HepG2 (cell line): ENCODE measurements at regions of chr4 and their contacts with region 1.

Region 1: DNA sequence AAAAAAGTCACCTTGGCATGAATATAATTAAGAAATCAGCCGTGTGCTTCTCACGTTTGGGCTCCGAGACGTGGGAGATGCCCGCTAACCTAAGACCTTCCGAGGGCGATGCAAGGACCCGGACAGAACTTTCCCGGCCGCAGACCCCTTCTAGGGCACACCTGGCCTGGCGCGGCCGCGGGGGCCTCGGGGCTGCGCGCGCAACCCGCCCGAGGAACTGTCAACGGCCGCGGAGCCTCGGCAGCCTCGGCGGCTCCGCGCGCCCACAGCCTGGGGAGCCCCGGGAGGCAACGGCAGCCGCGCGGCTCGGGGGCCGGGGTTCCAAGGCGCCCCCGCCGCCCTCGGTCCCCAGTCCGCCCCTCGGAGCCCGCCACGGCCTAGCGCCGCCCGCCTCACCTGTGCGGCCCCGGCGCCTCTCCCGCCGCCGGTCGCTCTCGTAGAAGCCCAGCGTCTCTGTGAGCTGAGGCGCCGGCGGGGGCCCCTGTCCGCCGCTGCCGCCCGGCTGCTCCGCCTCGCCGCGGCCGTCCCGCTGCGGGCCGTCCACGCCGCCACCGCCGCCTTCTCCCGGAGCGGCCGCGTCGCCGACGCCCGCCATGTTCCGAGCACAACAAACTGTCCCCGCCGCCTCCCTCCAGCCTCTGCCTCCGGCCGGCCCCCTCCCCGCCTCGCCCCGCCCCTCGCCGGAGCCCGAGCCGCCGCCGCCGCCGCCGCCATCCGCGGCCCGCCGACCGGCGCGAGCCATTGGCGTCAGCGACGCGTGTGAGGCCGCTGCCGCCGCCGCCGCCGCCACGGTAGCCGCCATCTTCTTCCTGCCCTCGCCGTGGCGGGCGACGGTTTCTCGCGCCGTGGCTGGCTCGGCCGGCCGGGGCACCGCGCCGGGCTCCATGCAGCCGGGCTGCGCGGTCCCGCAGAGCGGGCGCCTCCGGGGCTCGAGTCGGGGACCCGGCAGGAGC is at the start of gene TAPT1:
- DNase-seq: no peak
- ATAC-seq: peak; percentile 50
- H3K4me3 ChIP-seq: peak within 1 kb of the TSS; percentile 83 to 96 (median 94)
- H3K27ac ChIP-seq: peak within 1 kb of the TSS; percentile 90
- H3K4me1 ChIP-seq: peaks cover 51% of the 10 kb centered on the region
- H3K27me3 ChIP-seq: no peaks in the 10 kb centered on the region; a peak in 1 of 5 replicates
- CTCF ChIP-seq: no peak
- EP300 ChIP-seq: no peak
- POLR2A ChIP-seq: peak in 1 of 2 experiments; percentile 54; a peak in 1 of 4 replicates
- RAD21 ChIP-seq: 0 out of 2 replicates have a peak, but pooled peaks have one; percentile 13
- total RNA-seq, gene TAPT1: 16.3 and 24.5 TPM in 2 replicates

Region 2: GRCh38 chr4:16183604-16184003 is 42.5 kb before region 1 on chr4:
- CTCF ChIA-PET with region 1: no interaction called
- POLR2A ChIA-PET with region 1: no interaction called
- in situ Hi-C with region 1: no loop called
- intact Hi-C with region 1: no loop called
- DNase-seq: no peak
- ATAC-seq: no peak
- H3K4me3 ChIP-seq: no peak overlapping the region
- H3K27ac ChIP-seq: no peak overlapping the region
- H3K4me1 ChIP-seq: no peaks in the 10 kb centered on the region
- H3K27me3 ChIP-seq: no peaks in the 10 kb centered on the region; a peak in 1 of 5 replicates
- CTCF ChIP-seq: no peak
- EP300 ChIP-seq: no peak
- POLR2A ChIP-seq: no peak
- RAD21 ChIP-seq: no peak

Region 3: DNA sequence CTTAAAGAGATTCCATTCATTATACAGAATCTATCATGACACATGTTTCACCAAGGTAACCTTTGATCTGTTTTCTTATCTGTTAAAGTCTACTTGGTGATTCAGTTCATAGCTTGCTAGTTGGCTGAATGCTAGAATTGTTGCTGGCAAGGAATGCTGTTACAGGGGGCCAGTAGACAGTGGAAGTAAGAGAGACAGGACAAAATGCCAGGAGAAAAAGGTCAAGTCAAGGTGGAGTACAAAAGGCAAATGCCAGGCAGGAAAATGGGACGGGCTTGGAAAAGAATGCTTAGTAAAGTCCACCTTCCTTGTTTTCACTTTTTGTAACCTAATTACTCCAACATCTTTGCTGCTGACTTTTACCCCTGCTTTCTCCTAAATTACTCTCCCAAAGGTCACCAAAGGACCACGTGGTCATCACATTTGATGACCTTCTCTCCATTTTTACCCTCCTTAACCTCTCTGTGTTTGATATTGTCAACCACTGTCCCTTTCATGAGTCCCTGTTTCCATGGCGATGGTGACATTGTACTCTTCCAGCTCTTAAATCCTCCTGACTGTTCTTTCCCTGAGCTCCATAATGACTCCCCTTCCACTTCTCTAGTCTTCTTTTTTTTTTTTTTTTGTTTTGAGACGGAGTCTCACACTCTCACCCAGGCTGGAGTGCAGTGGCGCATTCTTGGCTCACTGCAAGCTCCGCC is 24.7 kb after region 1 on chr4:
- CTCF ChIA-PET with region 1: no interaction called
- POLR2A ChIA-PET with region 1: interaction called, 17 read pairs
- in situ Hi-C with region 1: no loop called
- intact Hi-C with region 1: loop called (anchors 2 kb)
- DNase-seq: peak; percentile 97
- ATAC-seq: peak; percentile 97
- H3K4me3 ChIP-seq: peak overlapping the region in 1 of 3 experiments; percentile 30; a peak in 1 of 6 replicates
- H3K27ac ChIP-seq: peak overlapping the region; percentile 86
- H3K4me1 ChIP-seq: peaks cover 60% of the 10 kb centered on the region
- H3K27me3 ChIP-seq: no peaks in the 10 kb centered on the region
- CTCF ChIP-seq: no peak
- EP300 ChIP-seq: peak; percentile 67 to 89; a peak in 3 of 4 replicates
- POLR2A ChIP-seq: no peak
- RAD21 ChIP-seq: no peak